Heart right ventricle (tissue), 16 donors: ENCODE measurements at regions of chr3 and their contacts with region 1.

Region 1: DNA sequence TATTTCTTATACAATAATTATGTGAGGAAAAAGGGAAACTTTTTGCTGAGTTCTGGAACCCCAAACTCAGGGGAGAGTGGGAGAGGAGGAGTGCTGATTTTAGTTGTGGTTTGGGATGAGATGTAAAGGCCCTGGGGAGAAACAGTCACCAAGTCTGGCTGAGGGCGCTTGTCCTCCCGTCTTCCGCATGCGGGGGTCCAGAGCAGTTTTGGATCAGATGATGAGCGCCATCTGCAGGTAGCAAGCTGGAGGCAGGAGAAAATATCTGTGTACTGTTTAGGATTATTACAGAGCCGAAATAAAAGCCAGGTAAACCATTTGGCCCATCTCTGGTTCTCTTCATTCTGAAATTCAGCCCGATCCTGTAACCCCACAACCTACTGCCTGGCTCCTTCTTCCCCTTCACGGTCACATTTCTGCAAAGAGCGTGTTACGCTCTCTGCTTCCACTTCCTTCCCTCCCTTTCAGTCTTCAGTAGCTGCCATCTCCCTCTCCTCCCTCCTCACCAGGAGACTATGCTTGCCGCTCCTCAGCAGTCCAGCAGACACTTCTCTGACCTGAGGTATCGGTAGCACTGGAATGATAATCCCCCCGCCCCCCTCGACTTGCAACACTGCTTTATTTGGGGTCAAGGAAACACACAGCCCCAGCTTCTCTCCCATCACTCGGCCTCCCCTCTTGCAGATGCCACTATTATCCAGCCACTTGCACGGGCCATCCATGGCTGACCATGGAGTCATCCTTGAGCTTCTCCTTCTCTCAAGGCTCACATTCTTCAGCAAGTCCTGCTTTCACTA is 1.4 kb upstream of the PARP14 start:
- DNase-seq: peak; percentile 72 to 88
- ATAC-seq: peak; percentile 65 to 87 (median 78)
- H3K4me3 ChIP-seq: peak overlapping the region in 9 of 10 donors; percentile 56 to 90 (median 83)
- H3K27ac ChIP-seq: peak overlapping the region; percentile 77 to 98 (median 94)
- H3K4me1 ChIP-seq: peaks cover 0 to 52% (median 34%) of the 10 kb centered on the region in 9 donors
- H3K27me3 ChIP-seq: no peaks in the 10 kb centered on the region
- CTCF ChIP-seq: peak; percentile 60 to 88 (median 80)

Region 2: GRCh38 chr3:122392868-122393844 is 286.1 kb before region 1 on chr3:
- intact Hi-C with region 1: loop called (anchors 1 to 10 kb)
- DNase-seq: no peak
- ATAC-seq: no peak
- H3K4me3 ChIP-seq: no peak overlapping the region
- H3K27ac ChIP-seq: peak overlapping the region in 2 of 10 donors; percentile 5 to 33
- H3K4me1 ChIP-seq: peaks cover 0 to 49% (median 15%) of the 10 kb centered on the region in 9 donors
- H3K27me3 ChIP-seq: no peaks in the 10 kb centered on the region
- CTCF ChIP-seq: peak; percentile 51 to 86 (median 71)

Region 3: GRCh38 chr3:122458992-122459391 is 220.3 kb before region 1 on chr3:
- intact Hi-C with region 1: loop called in 5 of 10 experiments (anchors 5 to 10 kb)
- DNase-seq: peak in 1 of 2 donors; percentile 18
- ATAC-seq: no peak
- H3K4me3 ChIP-seq: no peak overlapping the region
- H3K27ac ChIP-seq: no peak overlapping the region
- H3K4me1 ChIP-seq: no peaks in the 10 kb centered on the region
- H3K27me3 ChIP-seq: no peaks in the 10 kb centered on the region
- CTCF ChIP-seq: peak in 8 of 9 donors; percentile 20 to 59 (median 46)

Region 4: DNA sequence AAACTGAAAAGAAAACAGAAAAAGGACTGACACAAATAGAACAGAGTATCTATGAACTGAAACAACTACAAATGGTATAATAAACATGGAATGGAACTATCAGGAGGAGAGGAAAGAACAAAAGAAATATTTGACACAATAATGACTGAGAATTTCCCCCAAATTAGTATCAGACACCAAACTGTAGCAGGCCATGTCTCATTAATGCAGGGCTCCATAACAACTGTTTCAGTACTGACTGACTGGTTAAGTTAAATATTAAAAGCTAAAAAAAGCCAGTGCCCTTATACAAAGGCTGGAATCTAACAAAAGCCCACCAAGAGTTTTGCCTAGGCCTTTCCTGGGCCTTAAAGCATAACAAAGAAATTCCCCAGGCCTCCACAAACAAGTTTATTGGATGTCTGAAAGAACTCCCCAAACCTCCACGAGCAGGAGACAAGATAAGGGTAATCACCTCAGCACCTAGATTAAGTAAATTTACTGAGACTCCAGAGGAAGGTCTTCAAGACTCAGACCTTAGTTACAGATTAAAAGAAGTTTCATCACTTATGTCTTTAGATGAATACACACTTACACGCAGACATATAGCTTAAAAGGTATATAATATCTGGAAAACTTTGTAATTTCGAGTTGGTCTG is 210.3 kb before region 1 on chr3:
- intact Hi-C with region 1: loop called in 2 of 10 experiments (anchors 5 to 10 kb)
- DNase-seq: no peak
- ATAC-seq: no peak
- H3K4me3 ChIP-seq: no peak overlapping the region
- H3K27ac ChIP-seq: no peak overlapping the region
- H3K4me1 ChIP-seq: peaks cover 0 to 28% (median 12%) of the 10 kb centered on the region in 9 donors
- H3K27me3 ChIP-seq: no peaks in the 10 kb centered on the region
- CTCF ChIP-seq: no peak

Region 5: GRCh38 chr3:122538956-122539490 is 140.3 kb before region 1 on chr3:
- intact Hi-C with region 1: no loop called
- DNase-seq: no peak
- ATAC-seq: no peak
- H3K4me3 ChIP-seq: no peak overlapping the region
- H3K27ac ChIP-seq: no peak overlapping the region
- H3K4me1 ChIP-seq: peaks cover 0 to 7% (median 0%) of the 10 kb centered on the region in 9 donors
- H3K27me3 ChIP-seq: no peaks in the 10 kb centered on the region
- CTCF ChIP-seq: no peak

Region 6: GRCh38 chr3:122555275-122556071 is 123.8 kb before region 1 on chr3:
- intact Hi-C with region 1: loop called in 8 of 10 experiments (anchors 1 to 10 kb)
- DNase-seq: no peak
- ATAC-seq: peak in 7 of 8 donors; percentile 38 to 75 (median 62)
- H3K4me3 ChIP-seq: no peak overlapping the region
- H3K27ac ChIP-seq: no peak overlapping the region
- H3K4me1 ChIP-seq: peaks cover 0 to 29% (median 8%) of the 10 kb centered on the region in 9 donors
- H3K27me3 ChIP-seq: no peaks in the 10 kb centered on the region
- CTCF ChIP-seq: no peak

Region 7: GRCh38 chr3:122564155-122564912 is 114.9 kb before region 1 on chr3 and contains the starts of genes DTX3L and PARP9:
- intact Hi-C with region 1: loop called in 9 of 10 experiments (anchors 1 to 10 kb)
- DNase-seq: peak; percentile 85 to 87
- ATAC-seq: peak; percentile 98 to 99 (median 98)
- H3K4me3 ChIP-seq: peak within 1 kb of the TSS; percentile 58 to 96 (median 90)
- H3K27ac ChIP-seq: peak within 1 kb of the TSS; percentile 86 to 99 (median 96)
- H3K4me1 ChIP-seq: peaks cover 0 to 76% (median 42%) of the 10 kb centered on the region in 9 donors
- H3K27me3 ChIP-seq: no peaks in the 10 kb centered on the region
- CTCF ChIP-seq: no peak
- total RNA-seq, gene DTX3L: 8.0 to 61.1 (median 14.4) TPM
- total RNA-seq, gene PARP9: 9.1 to 60.4 (median 15.2) TPM